ENCODE measurements at regions of chr12 and their contacts with region 1.

Region 1: GRCh38 chr12:44015335-44015941 is 179.6 kb downstream of the TMEM117 start:
- DNase-seq: no peak
- H3K4me3 Mint-ChIP-seq: no peak overlapping the region
- H3K27ac Mint-ChIP-seq: no peak overlapping the region
- H3K4me1 Mint-ChIP-seq: no peaks in the 10 kb centered on the region
- H3K27me3 Mint-ChIP-seq: peaks cover 3% of the 10 kb centered on the region

Region 2: DNA sequence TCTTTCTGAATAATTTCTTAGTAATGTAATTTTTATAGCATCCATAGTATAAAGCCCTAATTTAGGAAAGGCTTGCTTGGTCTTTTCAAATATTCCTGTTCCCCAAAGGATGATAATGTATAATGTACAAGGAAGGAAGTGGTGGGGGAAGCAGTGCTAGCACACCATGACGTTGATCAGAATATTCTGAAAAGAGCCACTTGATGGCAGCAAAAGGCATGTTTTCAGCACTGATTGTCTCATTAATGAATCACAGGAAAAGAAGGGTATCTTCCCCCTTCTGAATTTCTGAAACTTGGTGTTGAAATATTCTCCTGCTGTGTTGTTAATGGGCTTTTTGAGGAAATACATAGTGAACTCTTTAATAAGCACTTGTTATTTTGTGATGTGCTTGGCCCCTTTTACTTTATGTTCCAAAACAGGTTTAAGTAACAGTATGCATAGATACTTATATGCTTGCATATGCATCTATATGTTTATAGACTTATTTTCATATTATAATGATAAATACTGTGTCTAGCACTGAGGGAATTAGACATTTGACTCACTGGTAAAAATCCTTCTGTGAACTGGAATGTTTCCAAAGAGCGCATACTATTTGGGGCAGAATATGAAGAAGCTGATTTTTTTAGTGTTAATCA is 57.6 kb before region 1 on chr12:
- intact Hi-C with region 1: loop called (anchors 1 kb)
- DNase-seq: no peak
- H3K4me3 Mint-ChIP-seq: no peak overlapping the region
- H3K27ac Mint-ChIP-seq: no peak overlapping the region
- H3K4me1 Mint-ChIP-seq: peaks cover 8% of the 10 kb centered on the region
- H3K27me3 Mint-ChIP-seq: no peaks in the 10 kb centered on the region

Region 3: GRCh38 chr12:44812062-44812461 is 796.6 kb after region 1 on chr12:
- intact Hi-C with region 1: loop called (anchors 1 kb)
- DNase-seq: peak; percentile 36
- H3K4me3 Mint-ChIP-seq: no peak overlapping the region
- H3K27ac Mint-ChIP-seq: no peak overlapping the region
- H3K4me1 Mint-ChIP-seq: peaks cover 20% of the 10 kb centered on the region
- H3K27me3 Mint-ChIP-seq: no peaks in the 10 kb centered on the region

Region 4: GRCh38 chr12:44875954-44876553 is 860.6 kb after region 1 on chr12 and contains the start of gene NELL2:
- intact Hi-C with region 1: loop called (anchors 5 kb)
- DNase-seq: peak; percentile 43
- H3K4me3 Mint-ChIP-seq: peak within 1 kb of the TSS; percentile 96
- H3K27ac Mint-ChIP-seq: peak within 1 kb of the TSS; percentile 78
- H3K4me1 Mint-ChIP-seq: peaks cover 33% of the 10 kb centered on the region
- H3K27me3 Mint-ChIP-seq: peaks cover 23% of the 10 kb centered on the region
- total RNA-seq, gene NELL2: 11.5 and 16.4 TPM in 2 replicates

Region 5: DNA sequence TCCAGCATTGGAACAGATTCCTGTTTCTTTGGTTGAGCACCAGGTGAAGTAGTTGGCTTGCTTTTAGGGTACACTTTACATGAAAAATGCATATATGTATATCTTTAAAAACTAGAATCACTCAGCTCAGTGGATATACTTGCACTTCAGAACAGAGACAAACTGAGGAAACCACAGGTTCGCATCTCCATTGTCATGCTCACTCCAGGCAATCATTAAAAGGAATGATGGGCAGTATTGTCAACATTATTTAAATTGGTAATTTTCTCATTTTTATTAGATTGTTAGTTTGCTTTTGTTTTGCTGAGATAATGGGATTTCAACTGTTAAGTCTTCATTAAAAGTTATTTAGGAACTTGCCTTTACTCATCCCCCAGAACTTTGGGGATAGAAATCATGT is 931.7 kb after region 1 on chr12:
- intact Hi-C with region 1: loop called (anchors 5 kb)
- DNase-seq: no peak
- H3K4me3 Mint-ChIP-seq: no peak overlapping the region
- H3K27ac Mint-ChIP-seq: no peak overlapping the region
- H3K4me1 Mint-ChIP-seq: peaks cover 4% of the 10 kb centered on the region
- H3K27me3 Mint-ChIP-seq: peaks cover 7% of the 10 kb centered on the region

Measured in activated T-helper 1 cell treated with anti-CD3 and anti-CD28 coated beads, Interleukin-12 subunit alpha, Interleukin-12 subunit beta, Interleukin-2, Interleukin-4 antibody, amounts not matched to agents 30 ng/mL and 10 ng/mL and 1 ng/mL, durations not matched to agents 14 hours and 24 hours and 36 hours (primary cell).